H1 (cell line): ENCODE measurements at regions of chr16 and their contacts with region 1.

Region 1: DNA sequence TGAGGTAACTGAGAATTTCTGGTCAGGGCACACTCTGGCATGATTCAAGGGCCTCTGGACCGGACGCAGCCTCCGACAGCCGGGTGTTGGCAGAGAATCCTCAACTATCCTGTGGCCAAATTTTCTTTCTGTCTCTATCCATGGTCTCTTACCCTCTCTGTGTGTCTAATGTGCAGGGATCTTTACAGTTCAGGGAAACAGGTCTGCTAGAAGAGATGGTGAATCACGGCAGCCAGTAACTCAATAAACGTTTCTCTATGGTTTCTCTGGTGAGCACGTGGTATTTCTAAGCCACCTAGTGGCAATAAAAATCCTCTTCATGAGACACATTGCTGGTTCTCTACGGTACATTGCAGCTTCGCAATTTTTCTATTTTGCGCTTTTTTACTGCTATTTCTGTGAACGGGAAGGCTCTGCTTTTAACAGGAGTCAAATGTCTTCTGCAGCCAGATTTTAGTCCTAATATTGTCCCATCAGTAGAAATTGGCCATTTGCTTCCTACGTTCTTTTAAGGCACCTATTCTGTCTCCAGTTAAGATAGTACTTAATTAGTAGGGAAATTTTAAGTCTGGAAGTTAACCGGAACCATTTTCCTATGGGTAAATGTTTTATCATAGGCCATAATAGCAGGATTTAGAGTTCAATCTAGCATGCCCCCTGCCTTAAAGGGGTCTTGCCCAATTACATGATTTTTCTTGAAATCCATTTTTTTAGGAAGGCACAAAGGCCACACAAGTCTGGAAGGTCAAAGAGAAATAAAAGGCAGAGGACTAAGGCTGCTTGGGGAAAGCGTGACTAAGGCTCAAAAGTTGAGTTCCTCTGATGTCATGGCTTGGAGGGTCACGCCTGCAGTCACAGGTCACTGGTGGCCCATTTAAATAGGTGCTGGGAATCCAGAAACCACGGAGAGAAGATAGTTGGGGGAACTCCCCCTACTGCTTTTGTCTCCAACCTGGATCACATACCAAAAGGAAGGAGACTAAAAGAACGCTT is 31.5 kb downstream of the QPRT start:
- DNase-seq: no peak
- H3K4me3 ChIP-seq: peak overlapping the region; percentile 65 to 99 (median 74)
- H3K27ac ChIP-seq: peak overlapping the region; percentile 91
- H3K4me1 ChIP-seq: peaks cover 0 to 7% (median 2%) of the 10 kb centered on the region in 4 experiments; a peak in 1 of 7 replicates
- H3K27me3 ChIP-seq: no peaks in the 10 kb centered on the region
- CTCF ChIP-seq: peak in 2 of 3 experiments; percentile 46 to 64; a peak in 3 of 4 replicates
- EP300 ChIP-seq: no peak
- POLR2A ChIP-seq: peak; percentile 5 to 71
- RAD21 ChIP-seq: 0 out of 4 replicates have a peak, but pooled peaks of 1 of the 2 experiments have one; percentile 24

Region 2: DNA sequence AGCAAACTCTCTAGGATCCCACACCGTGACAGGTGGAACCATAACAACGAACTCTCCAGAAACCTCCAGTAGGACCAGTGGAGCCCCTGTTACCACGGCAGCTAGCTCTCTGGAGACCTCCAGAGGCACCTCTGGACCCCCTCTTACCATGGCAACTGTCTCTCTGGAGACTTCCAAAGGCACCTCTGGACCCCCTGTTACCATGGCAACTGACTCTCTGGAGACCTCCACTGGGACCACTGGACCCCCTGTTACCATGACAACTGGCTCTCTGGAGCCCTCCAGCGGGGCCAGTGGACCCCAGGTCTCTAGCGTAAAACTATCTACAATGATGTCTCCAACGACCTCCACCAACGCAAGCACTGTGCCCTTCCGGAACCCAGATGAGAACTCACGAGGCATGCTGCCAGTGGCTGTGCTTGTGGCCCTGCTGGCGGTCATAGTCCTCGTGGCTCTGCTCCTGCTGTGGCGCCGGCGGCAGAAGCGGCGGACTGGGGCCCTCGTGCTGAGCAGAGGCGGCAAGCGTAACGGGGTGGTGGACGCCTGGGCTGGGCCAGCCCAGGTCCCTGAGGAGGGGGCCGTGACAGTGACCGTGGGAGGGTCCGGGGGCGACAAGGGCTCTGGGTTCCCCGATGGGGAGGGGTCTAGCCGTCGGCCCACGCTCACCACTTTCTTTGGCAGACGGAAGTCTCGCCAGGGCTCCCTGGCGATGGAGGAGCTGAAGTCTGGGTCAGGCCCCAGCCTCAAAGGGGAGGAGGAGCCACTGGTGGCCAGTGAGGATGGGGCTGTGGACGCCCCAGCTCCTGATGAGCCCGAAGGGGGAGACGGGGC is 46.2 kb before region 1 on chr16:
- CTCF ChIA-PET with region 1: no interaction called
- POLR2A ChIA-PET with region 1: interaction called, 10 read pairs
- DNase-seq: no peak
- H3K4me3 ChIP-seq: no peak overlapping the region
- H3K27ac ChIP-seq: no peak overlapping the region
- H3K4me1 ChIP-seq: peaks cover 0 to 24% (median 18%) of the 10 kb centered on the region in 4 experiments; a peak in 6 of 7 replicates
- H3K27me3 ChIP-seq: no peaks in the 10 kb centered on the region; a peak in 1 of 7 replicates
- CTCF ChIP-seq: no peak
- EP300 ChIP-seq: no peak
- POLR2A ChIP-seq: no peak
- RAD21 ChIP-seq: no peak

Region 3: DNA sequence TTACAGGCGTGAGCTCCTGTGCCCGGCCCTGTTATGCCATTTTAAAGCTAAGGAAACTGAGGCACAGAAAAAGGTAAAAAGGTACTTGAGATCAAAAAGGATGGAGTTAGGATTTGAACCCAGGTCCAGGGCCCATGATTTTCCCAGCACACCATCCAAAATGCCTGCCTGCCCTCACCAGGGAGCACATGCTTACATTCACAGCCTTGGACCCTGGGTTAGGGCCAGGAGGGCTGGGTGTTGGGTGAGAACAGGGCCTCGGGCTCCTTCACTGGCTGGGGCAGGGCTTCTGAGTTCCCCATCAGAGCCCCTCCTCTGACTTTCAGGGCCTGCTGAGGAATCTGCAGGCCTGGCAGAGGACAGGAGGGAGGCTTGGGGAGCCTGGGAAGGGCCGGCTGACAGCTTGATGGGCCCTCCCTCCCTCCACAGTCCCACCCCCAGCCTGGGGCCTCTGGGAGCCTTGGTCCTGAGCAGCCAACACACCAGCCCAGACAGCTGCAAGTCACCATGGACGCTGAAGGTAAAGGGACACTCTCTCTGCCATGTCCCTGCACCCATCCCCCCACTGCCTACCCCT is 31.7 kb before region 1 on chr16 and contains the start of gene QPRT:
- CTCF ChIA-PET with region 1: no interaction called
- POLR2A ChIA-PET with region 1: interaction called, 21 read pairs
- DNase-seq: peak; percentile 81 to 84
- H3K4me3 ChIP-seq: peak within 1 kb of the TSS; percentile 38 to 68 (median 58)
- H3K27ac ChIP-seq: peak within 1 kb of the TSS; percentile 91
- H3K4me1 ChIP-seq: peaks cover 2 to 14% (median 9%) of the 10 kb centered on the region in 4 experiments
- H3K27me3 ChIP-seq: no peaks in the 10 kb centered on the region
- CTCF ChIP-seq: peak in 1 of 3 experiments; percentile 9; a peak in 1 of 4 replicates
- EP300 ChIP-seq: peak in 1 of 2 experiments; percentile 57; a peak in 1 of 3 replicates
- POLR2A ChIP-seq: peak; percentile 64 to 66; a peak in 2 of 3 replicates
- RAD21 ChIP-seq: no peak
- total RNA-seq, gene QPRT: 102 and 106 TPM in 2 replicates

Region 4: GRCh38 chr16:29686740-29687332 is 23.7 kb before region 1 on chr16:
- CTCF ChIA-PET with region 1: interaction called, 8 read pairs
- POLR2A ChIA-PET with region 1: interaction called, 15 read pairs
- DNase-seq: no peak
- H3K4me3 ChIP-seq: no peak overlapping the region
- H3K27ac ChIP-seq: no peak overlapping the region
- H3K4me1 ChIP-seq: peaks cover 2 to 9% (median 5%) of the 10 kb centered on the region in 4 experiments; a peak in 5 of 7 replicates
- H3K27me3 ChIP-seq: no peaks in the 10 kb centered on the region
- CTCF ChIP-seq: no peak
- EP300 ChIP-seq: no peak
- POLR2A ChIP-seq: no peak
- RAD21 ChIP-seq: no peak

Region 5: DNA sequence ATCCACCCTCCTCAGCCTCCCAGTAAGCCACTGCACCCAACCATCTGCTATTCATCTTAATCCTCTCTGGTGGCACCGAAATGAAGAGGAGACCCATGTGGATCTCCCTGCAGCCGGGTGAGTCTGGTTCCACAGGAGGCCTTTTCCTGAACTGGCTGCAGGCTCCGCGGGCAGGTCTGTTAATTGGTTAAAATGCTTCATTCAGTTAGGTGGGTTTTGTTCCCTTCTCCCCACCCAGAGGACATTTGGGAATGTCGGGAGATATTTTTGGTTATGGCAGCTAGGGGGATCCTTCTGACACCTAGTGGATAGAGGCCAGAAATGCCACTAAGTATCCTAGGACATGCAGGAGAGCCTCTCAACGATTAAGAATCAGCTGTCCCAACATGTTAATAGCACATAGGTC is 18.6 kb after region 1 on chr16:
- CTCF ChIA-PET with region 1: interaction called, 138 read pairs
- POLR2A ChIA-PET with region 1: interaction called, 490 read pairs
- DNase-seq: no peak
- H3K4me3 ChIP-seq: no peak overlapping the region
- H3K27ac ChIP-seq: no peak overlapping the region
- H3K4me1 ChIP-seq: no peaks in the 10 kb centered on the region
- H3K27me3 ChIP-seq: no peaks in the 10 kb centered on the region
- CTCF ChIP-seq: peak in 2 of 3 experiments; percentile 68 to 90; a peak in 3 of 4 replicates
- EP300 ChIP-seq: no peak
- POLR2A ChIP-seq: no peak
- RAD21 ChIP-seq: peak; percentile 54 to 63

Region 6: DNA sequence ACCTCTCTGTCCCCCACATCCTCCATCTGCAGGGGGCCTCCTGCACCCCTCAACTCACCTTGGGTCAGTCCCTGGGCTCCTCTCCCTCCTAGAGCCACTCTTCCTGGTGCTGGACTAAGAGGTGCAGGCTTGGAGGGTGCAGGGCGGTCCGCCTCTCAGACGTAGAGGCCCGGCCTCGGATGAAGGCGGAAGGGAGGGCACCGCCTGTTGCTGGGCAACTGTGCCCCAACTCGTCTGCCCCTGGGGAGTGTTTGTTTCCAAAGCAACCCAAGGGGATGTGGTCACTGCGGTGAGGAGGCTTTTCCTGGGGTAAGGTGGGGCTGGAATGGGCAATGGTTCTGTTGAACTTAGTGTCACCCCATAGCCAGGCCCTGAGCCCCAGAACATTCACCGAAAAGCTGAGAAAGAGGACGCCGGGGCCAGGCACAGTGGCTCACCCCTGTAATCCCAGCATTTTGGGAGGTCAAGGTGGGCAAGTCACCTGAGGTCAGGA is 35.4 kb after region 1 on chr16 and contains the start of gene C16orf54:
- CTCF ChIA-PET with region 1: no interaction called
- POLR2A ChIA-PET with region 1: interaction called, 12 read pairs
- DNase-seq: peak in 1 of 2 experiments; percentile 65
- H3K4me3 ChIP-seq: no peak within 1 kb of the TSS
- H3K27ac ChIP-seq: no peak within 1 kb of the TSS
- H3K4me1 ChIP-seq: peaks cover 0 to 4% (median 2%) of the 10 kb centered on the region in 4 experiments; a peak in 4 of 7 replicates
- H3K27me3 ChIP-seq: no peaks in the 10 kb centered on the region
- CTCF ChIP-seq: no peak
- EP300 ChIP-seq: no peak
- POLR2A ChIP-seq: no peak
- RAD21 ChIP-seq: no peak
- total RNA-seq, gene C16orf54: not detected in 2 replicates

Region 7: GRCh38 chr16:29868396-29869009 is 158.0 kb after region 1 on chr16:
- CTCF ChIA-PET with region 1: no interaction called
- POLR2A ChIA-PET with region 1: no interaction called
- DNase-seq: no peak
- H3K4me3 ChIP-seq: no peak overlapping the region
- H3K27ac ChIP-seq: no peak overlapping the region
- H3K4me1 ChIP-seq: peaks cover 0 to 7% (median 3%) of the 10 kb centered on the region in 4 experiments; a peak in 3 of 7 replicates
- H3K27me3 ChIP-seq: no peaks in the 10 kb centered on the region
- CTCF ChIP-seq: no peak
- EP300 ChIP-seq: no peak
- POLR2A ChIP-seq: no peak
- RAD21 ChIP-seq: no peak